ENCODE measurements at regions of chr18 and their contacts with region 1.

Region 1: DNA sequence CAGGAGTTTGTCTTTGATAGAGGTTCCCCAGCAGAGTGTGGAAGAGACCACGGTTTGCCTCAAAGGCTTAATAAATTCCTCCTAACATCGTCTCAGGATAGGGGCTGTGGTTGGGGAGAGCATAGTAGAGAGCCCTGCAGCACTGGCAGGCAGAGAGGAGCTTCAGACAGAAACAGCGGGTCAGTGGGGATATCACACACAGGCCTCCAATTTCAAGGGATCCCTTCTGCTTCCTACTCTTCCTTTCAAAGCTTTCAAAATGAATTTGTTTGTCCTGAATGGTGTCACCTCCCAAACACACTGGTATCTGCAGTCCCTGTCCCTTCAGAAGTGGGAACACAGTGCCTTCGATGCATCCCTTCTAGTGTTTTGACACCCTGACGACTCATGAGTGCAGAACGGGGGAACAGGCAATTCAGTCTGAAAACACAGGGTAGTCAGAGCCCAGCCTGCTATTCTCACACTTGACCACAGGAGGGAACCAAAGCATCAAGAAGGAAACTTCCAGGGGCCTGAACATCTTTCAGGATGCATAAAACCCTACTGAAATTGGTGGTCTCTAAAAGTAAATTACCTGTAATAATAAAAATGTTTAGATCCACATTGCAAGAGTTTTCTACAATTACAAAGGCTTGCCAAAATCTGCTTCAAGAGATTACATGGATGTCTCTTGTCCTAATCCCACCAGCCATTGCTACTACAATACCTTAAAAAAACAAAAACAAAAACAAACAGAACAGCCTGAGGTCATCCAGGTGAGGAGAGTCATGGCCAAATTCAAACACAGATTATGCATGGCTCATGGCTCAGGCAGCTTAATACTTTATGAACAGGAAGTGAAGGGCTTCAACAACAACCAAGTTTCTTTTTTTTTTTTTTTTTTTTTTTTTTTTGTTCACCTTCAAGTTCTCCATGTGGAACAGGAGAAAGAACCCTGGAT is 49.8 kb downstream of the SLC14A2 start:
- DNase-seq: no peak
- H3K4me3 ChIP-seq: no peak overlapping the region
- H3K27ac ChIP-seq: no peak overlapping the region
- H3K27me3 ChIP-seq: no peaks in the 10 kb centered on the region
- CTCF ChIP-seq: peak; percentile 99

Region 2: DNA sequence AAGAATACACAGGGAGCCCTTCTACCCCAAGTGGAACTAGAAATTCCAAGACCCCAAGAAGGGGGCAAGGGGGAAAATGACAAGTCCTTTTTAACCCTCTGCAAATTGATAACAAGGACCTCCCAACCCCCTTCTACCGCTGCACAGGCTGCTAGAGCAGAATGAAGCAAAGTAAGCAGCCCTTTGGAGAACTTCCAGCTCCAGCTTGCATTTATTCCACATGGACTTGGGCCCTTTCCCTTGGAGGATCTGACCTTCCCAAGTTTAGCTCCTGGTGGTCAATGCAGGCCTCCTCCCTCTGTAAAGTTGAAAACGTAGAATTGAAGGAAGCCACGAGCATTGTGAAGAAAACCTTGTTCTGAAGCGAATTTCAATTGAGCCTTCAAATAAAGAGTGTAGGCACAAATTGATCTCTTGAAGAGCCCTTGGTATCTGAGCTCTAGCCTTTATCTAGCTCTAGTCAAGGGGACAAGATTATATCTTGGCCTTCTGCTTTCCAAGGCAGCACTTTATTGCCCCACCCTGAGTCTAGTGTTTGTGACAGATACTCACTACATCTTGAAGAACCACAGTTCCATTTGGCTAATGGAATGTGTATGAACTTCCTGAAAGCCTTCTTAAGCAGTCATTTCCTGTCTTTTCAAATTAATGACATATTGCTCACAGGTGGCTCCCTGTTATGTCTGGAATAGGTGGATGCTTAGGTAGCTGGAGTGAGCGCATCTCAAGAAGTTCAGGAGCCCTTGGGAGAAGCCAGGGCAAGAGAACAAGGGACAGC is 12.6 kb before region 1 on chr18:
- CTCF ChIA-PET with region 1: interaction called, 10 read pairs
- POLR2A ChIA-PET with region 1: no interaction called
- DNase-seq: no peak
- H3K4me3 ChIP-seq: no peak overlapping the region
- H3K27ac ChIP-seq: no peak overlapping the region
- H3K27me3 ChIP-seq: peaks cover 15% of the 10 kb centered on the region
- CTCF ChIP-seq: no peak

Region 3: GRCh38 chr18:45817543-45817942 is 152.4 kb after region 1 on chr18:
- CTCF ChIA-PET with region 1: no interaction called
- POLR2A ChIA-PET with region 1: no interaction called
- DNase-seq: no peak
- H3K4me3 ChIP-seq: no peak overlapping the region
- H3K27ac ChIP-seq: no peak overlapping the region
- H3K27me3 ChIP-seq: no peaks in the 10 kb centered on the region
- CTCF ChIP-seq: no peak

Region 4: GRCh38 chr18:45839414-45840395 is 174.6 kb after region 1 on chr18:
- CTCF ChIA-PET with region 1: interaction called, 40 read pairs
- POLR2A ChIA-PET with region 1: no interaction called
- DNase-seq: peak; percentile 65
- H3K4me3 ChIP-seq: no peak overlapping the region
- H3K27ac ChIP-seq: no peak overlapping the region
- H3K27me3 ChIP-seq: no peaks in the 10 kb centered on the region
- CTCF ChIP-seq: peak; percentile 88

Region 5: DNA sequence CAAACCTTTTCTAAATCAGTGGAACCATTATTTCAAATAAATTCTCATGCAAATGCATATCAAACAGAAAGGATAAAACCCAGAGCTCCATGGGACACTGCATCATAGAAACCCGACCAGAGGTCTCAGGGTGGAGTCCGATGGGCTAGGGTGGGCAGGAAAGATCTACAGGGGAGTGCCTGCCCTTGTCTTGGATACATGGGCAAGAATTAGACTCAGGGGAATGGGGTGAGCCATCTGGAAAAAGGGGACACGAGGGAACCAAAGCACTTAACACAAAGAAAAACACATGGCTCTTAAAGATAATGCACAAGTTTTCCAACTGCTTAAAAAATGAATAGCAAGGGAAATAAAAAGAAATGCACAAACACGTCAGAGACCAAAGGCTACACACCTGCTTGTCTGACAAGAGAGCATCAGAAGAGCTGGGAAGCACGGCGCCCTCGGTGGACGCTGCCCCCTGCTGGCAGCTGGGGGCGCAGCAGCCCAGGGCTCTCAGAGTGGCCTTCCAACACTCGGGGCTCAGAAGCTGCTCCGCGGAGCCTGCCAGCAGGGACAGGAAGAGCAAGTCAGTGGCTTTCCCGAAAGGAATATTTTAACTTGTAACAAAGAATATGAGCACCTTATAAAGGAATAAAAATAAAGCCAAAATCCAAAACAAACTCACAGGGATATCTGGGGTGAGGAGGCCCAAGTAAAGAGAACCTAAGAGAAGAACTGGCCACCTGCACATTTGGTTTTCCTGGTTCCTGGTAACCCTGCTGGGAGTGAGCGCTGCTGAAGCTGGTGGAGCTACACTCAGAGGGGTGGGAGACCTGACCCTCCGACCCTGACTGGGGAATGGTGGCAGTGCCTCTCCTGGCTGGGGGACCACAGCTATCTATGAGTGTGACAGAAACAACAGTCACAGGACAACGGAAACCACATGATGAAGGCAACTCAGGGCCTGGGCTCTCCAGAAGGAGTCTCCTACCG is 214.9 kb after region 1 on chr18:
- CTCF ChIA-PET with region 1: interaction called, 234 read pairs
- POLR2A ChIA-PET with region 1: no interaction called
- DNase-seq: peak; percentile 38
- H3K4me3 ChIP-seq: no peak overlapping the region
- H3K27ac ChIP-seq: no peak overlapping the region
- H3K27me3 ChIP-seq: no peaks in the 10 kb centered on the region
- CTCF ChIP-seq: peak; percentile 99

Region 6: GRCh38 chr18:45962461-45962860 is 297.4 kb after region 1 on chr18:
- CTCF ChIA-PET with region 1: interaction called, 10 read pairs
- POLR2A ChIA-PET with region 1: no interaction called
- DNase-seq: no peak
- H3K4me3 ChIP-seq: no peak overlapping the region
- H3K27ac ChIP-seq: peak overlapping the region; percentile 63
- H3K27me3 ChIP-seq: no peaks in the 10 kb centered on the region
- CTCF ChIP-seq: no peak

Region 7: DNA sequence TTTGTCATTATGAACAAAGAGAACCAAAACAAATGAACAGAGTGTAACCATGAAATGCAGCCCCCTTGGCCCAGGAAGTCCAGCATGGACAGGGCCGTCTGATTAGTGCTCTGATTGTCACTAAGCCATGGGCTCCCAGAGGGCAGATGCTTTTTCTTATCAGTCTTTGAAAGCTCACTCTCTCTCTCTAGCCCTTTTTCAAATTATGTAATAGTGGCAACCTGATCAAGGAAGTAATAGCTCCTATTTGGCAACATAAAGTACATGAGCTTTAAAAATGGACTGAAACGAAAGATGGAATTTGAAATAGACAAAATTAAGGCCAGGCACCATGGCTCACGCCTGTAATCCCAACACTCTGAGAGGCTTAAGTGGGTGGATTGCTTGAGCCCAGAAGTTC is 334.4 kb after region 1 on chr18:
- CTCF ChIA-PET with region 1: interaction called, 11 read pairs
- POLR2A ChIA-PET with region 1: no interaction called
- DNase-seq: no peak
- H3K4me3 ChIP-seq: no peak overlapping the region
- H3K27ac ChIP-seq: no peak overlapping the region
- H3K27me3 ChIP-seq: no peaks in the 10 kb centered on the region
- CTCF ChIP-seq: no peak

Region 8: GRCh38 chr18:46182633-46183358 is 517.7 kb after region 1 on chr18:
- CTCF ChIA-PET with region 1: no interaction called
- POLR2A ChIA-PET with region 1: no interaction called
- DNase-seq: no peak
- H3K4me3 ChIP-seq: no peak overlapping the region
- H3K27ac ChIP-seq: no peak overlapping the region
- H3K27me3 ChIP-seq: no peaks in the 10 kb centered on the region
- CTCF ChIP-seq: no peak